ENCODE measurements at regions of chr6 and their contacts with region 1.

Region 1: GRCh38 chr6:107847844-107848802 is 24.0 kb upstream of the SCML4 start:
- DNase-seq: peak; percentile 85
- ATAC-seq: peak; percentile 93
- H3K4me3 Mint-ChIP-seq: peak overlapping the region; percentile 69
- H3K27ac Mint-ChIP-seq: no peak overlapping the region
- H3K4me1 Mint-ChIP-seq: peaks cover 24% of the 10 kb centered on the region
- H3K27me3 Mint-ChIP-seq: peaks cover 2% of the 10 kb centered on the region

Region 2: GRCh38 chr6:107674995-107675738 is 173.0 kb before region 1 on chr6:
- CTCF ChIA-PET with region 1: interaction called, 43 read pairs
- DNase-seq: peak; percentile 93
- ATAC-seq: peak; percentile 99
- H3K4me3 Mint-ChIP-seq: peak overlapping the region; percentile 50
- H3K27ac Mint-ChIP-seq: peak overlapping the region; percentile 88
- H3K4me1 Mint-ChIP-seq: peaks cover 21% of the 10 kb centered on the region
- H3K27me3 Mint-ChIP-seq: peaks cover 2% of the 10 kb centered on the region

Region 3: GRCh38 chr6:107712665-107713551 is 135.2 kb before region 1 on chr6:
- CTCF ChIA-PET with region 1: interaction called, 16 read pairs
- DNase-seq: peak; percentile 59
- ATAC-seq: peak; percentile 58
- H3K4me3 Mint-ChIP-seq: peak overlapping the region; percentile 67
- H3K27ac Mint-ChIP-seq: peak overlapping the region; percentile 84
- H3K4me1 Mint-ChIP-seq: peaks cover 51% of the 10 kb centered on the region
- H3K27me3 Mint-ChIP-seq: no peaks in the 10 kb centered on the region

Region 4: DNA sequence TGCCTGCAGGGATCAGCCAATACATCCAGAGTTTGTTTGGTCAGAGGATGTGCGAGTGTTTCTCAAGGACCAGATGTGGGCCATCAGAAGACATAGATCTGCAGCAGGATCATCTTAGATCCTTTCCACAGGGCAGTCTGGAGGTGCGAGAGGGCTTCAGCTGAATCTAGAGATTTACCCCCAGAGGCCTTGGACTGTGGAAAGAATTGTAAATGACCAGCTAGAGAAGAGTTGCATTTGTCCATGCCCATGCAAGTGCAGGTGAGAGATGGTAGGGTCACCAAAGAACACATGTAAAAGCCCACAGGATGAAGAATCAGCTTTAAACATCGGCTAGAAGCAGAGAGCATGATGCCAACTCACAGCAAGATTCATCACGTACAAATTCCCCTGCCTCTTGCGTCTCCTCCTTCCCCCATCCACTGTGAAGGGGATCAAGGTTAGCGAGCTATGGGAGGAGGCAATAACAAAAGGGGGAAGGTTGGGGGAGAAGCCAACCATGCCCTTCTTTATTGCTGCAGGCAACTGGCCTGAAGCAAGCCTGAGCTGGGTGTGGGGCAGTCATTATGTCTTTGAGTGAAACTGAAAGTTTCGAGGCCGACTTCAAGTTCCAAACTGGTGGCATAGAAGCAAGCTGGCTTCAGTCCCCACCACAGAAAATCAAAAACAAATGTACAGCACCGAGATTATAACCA is 107.5 kb before region 1 on chr6:
- CTCF ChIA-PET with region 1: interaction called, 30 read pairs
- DNase-seq: peak; percentile 65
- ATAC-seq: peak; percentile 72
- H3K4me3 Mint-ChIP-seq: peak overlapping the region; percentile 66
- H3K27ac Mint-ChIP-seq: peak overlapping the region; percentile 90
- H3K4me1 Mint-ChIP-seq: peaks cover 55% of the 10 kb centered on the region
- H3K27me3 Mint-ChIP-seq: no peaks in the 10 kb centered on the region

Region 5: GRCh38 chr6:107796156-107796555 is 52.0 kb before region 1 on chr6:
- CTCF ChIA-PET with region 1: interaction called, 10 read pairs
- DNase-seq: no peak
- ATAC-seq: no peak
- H3K4me3 Mint-ChIP-seq: no peak overlapping the region
- H3K27ac Mint-ChIP-seq: no peak overlapping the region
- H3K4me1 Mint-ChIP-seq: peaks cover 36% of the 10 kb centered on the region
- H3K27me3 Mint-ChIP-seq: peaks cover 3% of the 10 kb centered on the region

Region 6: GRCh38 chr6:107820338-107821261 is 27.5 kb before region 1 on chr6:
- CTCF ChIA-PET with region 1: interaction called, 91 read pairs
- DNase-seq: peak; percentile 66
- ATAC-seq: peak; percentile 2
- H3K4me3 Mint-ChIP-seq: peak overlapping the region; percentile 84
- H3K27ac Mint-ChIP-seq: peak overlapping the region; percentile 98
- H3K4me1 Mint-ChIP-seq: peaks cover 76% of the 10 kb centered on the region
- H3K27me3 Mint-ChIP-seq: no peaks in the 10 kb centered on the region

Region 7: DNA sequence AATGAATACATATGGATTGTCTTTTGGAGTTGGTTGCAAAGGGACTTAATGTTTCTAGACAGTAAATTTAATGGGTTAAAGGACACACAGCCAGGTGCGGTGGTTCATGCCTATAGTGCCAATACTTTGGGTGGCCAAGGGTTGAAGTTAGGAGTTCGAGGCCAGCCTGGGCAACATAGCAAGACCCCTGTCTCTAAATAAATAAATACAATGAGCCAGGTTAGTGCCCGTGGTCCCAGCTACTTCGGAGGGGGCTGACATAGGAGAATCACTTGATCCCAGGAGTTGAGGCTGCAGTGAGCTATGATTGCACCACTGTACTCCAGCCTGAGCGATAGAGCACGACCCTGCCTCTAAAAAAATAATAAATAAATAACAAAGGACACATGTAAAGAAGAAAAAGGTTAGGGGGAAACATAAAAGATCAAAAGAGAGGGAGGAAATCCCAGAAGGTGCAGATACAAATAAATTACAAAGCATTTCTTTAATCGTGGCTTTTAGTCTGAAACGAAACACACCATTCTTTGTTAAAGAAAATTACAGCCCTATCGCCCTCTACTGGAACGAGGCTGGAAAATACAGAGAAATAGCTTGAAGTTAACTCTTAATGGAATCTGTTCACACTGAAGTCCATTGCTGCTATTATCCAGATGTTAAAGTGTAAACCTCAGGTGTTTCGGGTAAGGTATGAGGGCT is 18.6 kb after region 1 on chr6:
- CTCF ChIA-PET with region 1: interaction called, 37 read pairs
- DNase-seq: peak; percentile 51
- ATAC-seq: peak; percentile 61
- H3K4me3 Mint-ChIP-seq: no peak overlapping the region
- H3K27ac Mint-ChIP-seq: peak overlapping the region; percentile 5
- H3K4me1 Mint-ChIP-seq: peaks cover 4% of the 10 kb centered on the region
- H3K27me3 Mint-ChIP-seq: no peaks in the 10 kb centered on the region

Region 8: GRCh38 chr6:108294727-108295625 is 446.9 kb after region 1 on chr6 and contains the start of gene AFG1L:
- CTCF ChIA-PET with region 1: no interaction called
- DNase-seq: peak; percentile 93
- ATAC-seq: peak; percentile 95
- H3K4me3 Mint-ChIP-seq: peak within 1 kb of the TSS; percentile 89
- H3K27ac Mint-ChIP-seq: peak within 1 kb of the TSS; percentile 99
- H3K4me1 Mint-ChIP-seq: peaks cover 24% of the 10 kb centered on the region
- H3K27me3 Mint-ChIP-seq: no peaks in the 10 kb centered on the region
- total RNA-seq, gene AFG1L: 3.9 to 8.9 TPM